OCI-LY7 (cell line): ENCODE measurements at regions of chr12 and their contacts with region 1.

Region 1: GRCh38 chr12:32106517-32107358 is at the start of gene BICD1:
- DNase-seq: peak; percentile 84
- H3K4me3 ChIP-seq: peak within 1 kb of the TSS; percentile 97
- H3K27ac ChIP-seq: peak within 1 kb of the TSS; percentile 66
- H3K4me1 ChIP-seq: peaks cover 25% of the 10 kb centered on the region
- CTCF ChIP-seq: peak; percentile 60
- total RNA-seq, gene BICD1: 40.4 and 42.9 TPM in 2 replicates

Region 2: DNA sequence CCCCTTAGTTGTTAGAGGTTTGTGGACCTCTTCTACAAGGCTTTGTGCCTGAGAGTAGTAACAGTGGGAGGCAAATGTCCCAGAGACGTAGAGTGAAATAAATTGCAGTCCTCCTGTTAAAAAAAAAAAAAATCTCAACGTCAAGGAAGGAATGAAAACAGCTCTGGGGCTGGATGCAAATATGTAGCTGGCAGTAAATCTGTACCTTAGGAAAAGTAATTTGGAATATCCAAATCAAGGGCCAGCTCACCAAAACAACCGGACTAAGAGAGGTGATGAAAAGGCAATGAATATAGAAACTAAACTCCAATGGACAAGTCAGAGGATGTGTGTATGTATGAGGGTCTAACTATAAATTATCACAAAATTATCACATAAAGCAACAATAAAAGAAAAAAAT is 807.8 kb before region 1 on chr12:
- CTCF ChIA-PET with region 1: no interaction called
- POLR2A ChIA-PET with region 1: no interaction called
- intact Hi-C with region 1: no loop called
- DNase-seq: no peak
- H3K4me3 ChIP-seq: no peak overlapping the region
- H3K27ac ChIP-seq: no peak overlapping the region
- H3K4me1 ChIP-seq: no peaks in the 10 kb centered on the region
- CTCF ChIP-seq: no peak

Region 3: DNA sequence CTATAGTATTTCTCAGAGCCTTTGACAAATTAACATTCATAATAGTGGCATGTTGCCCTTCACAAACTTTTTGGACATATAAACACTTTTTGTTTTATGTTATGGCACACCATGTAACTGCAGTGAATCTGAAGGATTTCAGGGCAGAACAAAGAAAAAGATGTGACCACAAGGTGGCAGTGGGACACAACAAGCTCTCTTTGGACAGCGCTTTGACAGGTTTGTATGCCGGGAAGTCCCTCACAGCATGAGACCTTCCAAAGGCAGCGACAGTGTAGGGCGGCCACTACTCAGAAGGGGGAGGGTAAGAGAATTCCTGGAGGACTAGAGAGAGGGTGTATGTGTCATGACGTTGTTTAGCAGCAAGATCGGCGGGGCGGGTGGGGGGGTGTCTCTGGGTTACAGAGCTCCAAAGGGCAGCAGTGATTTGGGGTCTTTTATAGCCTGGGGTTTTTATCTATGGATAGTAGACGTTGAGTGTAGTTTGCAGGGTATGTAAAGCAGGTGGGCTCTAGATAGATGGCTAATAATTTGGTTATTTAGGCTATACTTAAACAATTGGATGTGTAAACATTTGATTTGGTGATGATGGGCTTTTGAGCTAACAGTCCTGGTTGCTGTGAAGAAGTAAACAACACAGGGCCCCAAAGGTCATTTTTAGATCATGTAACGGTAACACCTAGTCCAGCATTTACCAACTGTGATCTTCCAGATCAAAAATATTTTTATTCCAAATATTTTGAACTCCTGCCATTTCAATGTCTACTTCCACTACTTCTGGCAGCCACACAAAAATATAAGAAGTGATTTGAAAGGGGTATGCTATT is 424.4 kb before region 1 on chr12:
- CTCF ChIA-PET with region 1: no interaction called
- POLR2A ChIA-PET with region 1: interaction called, 4 read pairs
- intact Hi-C with region 1: loop called (anchors 2 kb)
- DNase-seq: peak; percentile 95
- H3K4me3 ChIP-seq: no peak overlapping the region
- H3K27ac ChIP-seq: peak overlapping the region; percentile 56
- H3K4me1 ChIP-seq: peaks cover 34% of the 10 kb centered on the region
- CTCF ChIP-seq: peak; percentile 92

Region 4: DNA sequence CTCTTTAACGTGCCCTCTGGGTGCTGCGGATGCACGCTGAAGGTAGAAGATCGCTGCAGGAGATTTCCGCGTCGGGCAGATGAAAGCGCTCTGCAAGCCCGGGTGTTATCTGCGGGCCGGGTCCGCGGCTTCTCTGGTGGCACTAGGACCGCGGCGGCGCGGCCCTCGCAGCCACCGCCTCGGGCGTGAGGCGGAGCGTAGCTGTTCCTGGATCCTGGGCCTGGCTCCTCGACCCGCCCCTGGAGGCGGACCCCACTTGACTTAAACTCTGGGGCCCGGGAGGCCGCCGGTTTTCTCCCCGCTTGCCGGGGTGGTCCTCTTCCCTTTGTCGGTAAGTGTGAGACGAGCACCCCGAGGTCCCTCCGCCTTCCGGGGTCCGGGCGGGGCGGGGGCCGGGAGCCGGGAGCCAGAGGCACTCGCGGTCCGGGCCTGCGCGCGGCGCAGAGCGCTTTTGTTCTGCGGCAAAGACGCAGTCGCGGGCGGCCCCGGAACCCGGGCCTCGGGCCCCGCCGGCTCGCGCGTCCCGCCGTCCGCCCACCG is 147.5 kb before region 1 on chr12 and contains the start of gene RESF1:
- CTCF ChIA-PET with region 1: no interaction called
- POLR2A ChIA-PET with region 1: no interaction called
- intact Hi-C with region 1: loop called (anchors 1 kb)
- DNase-seq: peak; percentile 97
- H3K4me3 ChIP-seq: peak within 1 kb of the TSS; percentile 78
- H3K27ac ChIP-seq: peak within 1 kb of the TSS; percentile 87
- H3K4me1 ChIP-seq: peaks cover 28% of the 10 kb centered on the region
- CTCF ChIP-seq: no peak
- total RNA-seq, gene RESF1: 53.3 and 70.4 TPM in 2 replicates

Region 5: GRCh38 chr12:32062881-32063280 is 43.9 kb before region 1 on chr12:
- CTCF ChIA-PET with region 1: interaction called, 4 read pairs
- POLR2A ChIA-PET with region 1: no interaction called
- intact Hi-C with region 1: loop called (anchors 2 kb)
- DNase-seq: peak; percentile 48
- H3K4me3 ChIP-seq: no peak overlapping the region
- H3K27ac ChIP-seq: peak overlapping the region; percentile 15
- H3K4me1 ChIP-seq: peaks cover 24% of the 10 kb centered on the region
- CTCF ChIP-seq: peak; percentile 20; the same call in 1 of the 2 replicates

Region 6: GRCh38 chr12:32084017-32084688 is 22.6 kb before region 1 on chr12:
- CTCF ChIA-PET with region 1: interaction called, 3 read pairs
- POLR2A ChIA-PET with region 1: interaction called, 14 read pairs
- intact Hi-C with region 1: no loop called
- DNase-seq: no peak
- H3K4me3 ChIP-seq: no peak overlapping the region
- H3K27ac ChIP-seq: no peak overlapping the region
- H3K4me1 ChIP-seq: no peaks in the 10 kb centered on the region
- CTCF ChIP-seq: no peak

Region 7: GRCh38 chr12:32264961-32265360 is 158.2 kb after region 1 on chr12:
- CTCF ChIA-PET with region 1: no interaction called
- POLR2A ChIA-PET with region 1: interaction called, 3 read pairs
- intact Hi-C with region 1: loop called (anchors 2 kb)
- DNase-seq: peak; percentile 96
- H3K4me3 ChIP-seq: peak overlapping the region; percentile 56
- H3K27ac ChIP-seq: peak overlapping the region; percentile 99
- H3K4me1 ChIP-seq: peaks cover 95% of the 10 kb centered on the region
- CTCF ChIP-seq: no peak

Region 8: GRCh38 chr12:32273712-32274111 is 167.0 kb after region 1 on chr12:
- CTCF ChIA-PET with region 1: no interaction called
- POLR2A ChIA-PET with region 1: no interaction called
- intact Hi-C with region 1: loop called (anchors 2 kb)
- DNase-seq: peak; percentile 92
- H3K4me3 ChIP-seq: peak overlapping the region; percentile 50
- H3K27ac ChIP-seq: peak overlapping the region; percentile 97
- H3K4me1 ChIP-seq: peaks cover 65% of the 10 kb centered on the region
- CTCF ChIP-seq: no peak